ENCODE measurements at regions of chr5 and their contacts with region 1.

Region 1: DNA sequence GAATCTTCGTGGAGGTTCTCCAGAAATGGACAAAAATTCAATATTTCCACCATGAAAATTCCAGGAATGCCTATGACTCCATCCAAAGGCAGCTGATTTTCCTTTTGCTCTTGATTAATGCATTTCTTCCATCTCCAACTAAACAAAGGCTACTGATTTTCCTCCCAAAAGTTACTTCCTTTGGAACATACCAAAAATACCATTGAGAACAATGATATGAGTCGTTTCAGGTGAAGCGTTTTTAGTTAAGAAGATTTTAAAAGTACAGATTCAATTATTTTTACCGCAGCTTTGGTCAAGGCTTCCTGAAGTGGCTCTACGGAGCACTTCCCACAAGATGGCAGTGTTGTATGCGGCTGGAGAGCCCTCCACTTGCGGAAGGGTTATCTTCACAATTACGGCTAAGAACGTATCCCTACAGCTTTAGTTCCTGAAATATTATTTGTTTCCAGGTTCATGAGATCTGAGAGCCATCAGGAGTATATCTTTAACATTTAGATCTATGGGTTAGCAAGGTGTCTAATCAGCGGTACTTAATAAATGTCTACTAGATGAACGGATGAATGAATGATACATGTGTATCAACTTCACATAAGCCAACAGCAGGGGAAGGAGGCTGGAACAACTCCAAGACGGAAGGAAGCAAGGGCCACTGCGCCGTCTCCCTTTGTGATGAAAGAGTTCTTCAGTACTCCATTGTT is 35.9 kb upstream of the ARSB start:
- DNase-seq: peak; percentile 83

Region 2: DNA sequence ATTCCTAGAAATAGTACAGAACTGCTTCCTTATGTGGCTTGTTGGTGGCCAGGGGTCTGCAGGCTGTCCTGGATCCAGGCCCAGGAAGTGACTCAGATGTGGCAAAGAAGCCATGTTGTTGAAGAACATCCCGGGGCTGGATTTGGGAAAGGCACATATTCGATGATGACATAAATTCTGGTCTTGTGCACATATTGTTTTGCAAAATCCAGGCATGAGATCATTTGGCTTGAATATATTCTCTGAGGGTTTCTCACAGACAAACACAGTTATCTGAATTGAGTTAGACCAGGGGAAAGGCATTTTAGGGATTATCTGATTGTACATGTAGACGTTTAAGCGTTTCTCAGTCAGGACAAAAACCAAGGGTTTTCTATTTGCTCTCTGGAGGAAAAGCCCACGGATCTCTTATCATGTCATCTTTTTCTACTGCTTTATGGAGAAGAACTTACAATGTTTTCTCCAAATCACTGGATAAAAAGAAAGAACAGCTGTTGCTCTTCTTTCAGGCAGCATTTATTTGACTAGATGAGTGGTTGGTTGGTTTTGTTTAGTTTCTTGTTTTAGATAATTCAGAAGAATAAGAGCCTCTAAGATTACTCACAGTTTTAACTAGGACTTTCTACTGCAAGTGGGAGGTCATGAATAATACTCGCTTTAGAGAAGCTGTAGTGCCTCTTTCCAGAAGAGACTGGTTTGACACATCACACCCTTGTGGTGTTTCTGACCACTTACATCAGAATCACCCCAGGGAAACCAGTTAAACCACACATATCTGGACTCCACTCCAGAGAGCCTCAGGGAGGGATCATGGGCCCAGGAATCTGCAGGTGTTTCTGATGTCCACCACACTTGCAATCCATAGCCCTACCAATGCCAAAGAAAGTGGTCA is 343.0 kb before region 1 on chr5:
- intact Hi-C with region 1: no loop called
- DNase-seq: peak; percentile 87

Region 3: DNA sequence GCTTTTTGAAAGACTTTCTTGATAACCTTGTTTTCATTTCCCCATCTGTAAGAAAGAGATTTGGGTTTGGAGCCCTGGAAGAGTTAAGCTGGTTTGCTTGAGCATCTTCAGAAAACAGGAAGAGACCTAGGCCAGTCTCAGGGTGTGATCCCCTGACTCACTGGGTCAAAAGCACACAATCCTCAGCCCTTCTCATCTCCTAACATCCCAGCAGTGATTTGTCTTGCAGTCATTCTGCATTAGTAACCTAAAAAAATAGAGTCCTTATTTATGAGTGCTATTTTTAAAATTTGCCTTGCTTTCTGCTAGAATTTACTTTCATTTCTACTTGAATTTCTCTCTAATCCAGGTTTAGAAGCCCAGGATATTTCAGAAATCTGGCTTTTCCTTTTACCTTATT is 19.5 kb before region 1 on chr5:
- intact Hi-C with region 1: no loop called
- DNase-seq: no peak

Region 4: DNA sequence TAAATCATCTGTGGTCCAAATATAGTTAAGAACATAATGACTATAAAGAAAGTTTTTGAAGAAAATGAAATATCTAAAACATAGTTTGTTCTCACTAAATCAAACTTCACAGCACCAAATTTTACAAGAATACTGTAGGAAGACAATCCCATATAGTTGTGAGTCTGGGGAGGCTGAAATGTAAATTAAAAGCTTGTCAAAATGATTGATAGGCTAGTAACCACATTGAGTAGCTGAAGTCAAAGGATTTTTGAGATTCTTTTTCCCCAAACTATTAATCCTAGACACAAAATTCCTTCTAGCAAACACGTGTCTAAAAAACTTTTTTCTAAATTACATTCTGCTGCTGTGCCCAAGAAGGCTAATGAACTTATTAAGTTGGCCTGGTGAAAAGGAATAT is 103.6 kb after region 1 on chr5:
- intact Hi-C with region 1: loop called in 1 of 2 experiments (anchors 5 kb)
- DNase-seq: no peak

Region 5: DNA sequence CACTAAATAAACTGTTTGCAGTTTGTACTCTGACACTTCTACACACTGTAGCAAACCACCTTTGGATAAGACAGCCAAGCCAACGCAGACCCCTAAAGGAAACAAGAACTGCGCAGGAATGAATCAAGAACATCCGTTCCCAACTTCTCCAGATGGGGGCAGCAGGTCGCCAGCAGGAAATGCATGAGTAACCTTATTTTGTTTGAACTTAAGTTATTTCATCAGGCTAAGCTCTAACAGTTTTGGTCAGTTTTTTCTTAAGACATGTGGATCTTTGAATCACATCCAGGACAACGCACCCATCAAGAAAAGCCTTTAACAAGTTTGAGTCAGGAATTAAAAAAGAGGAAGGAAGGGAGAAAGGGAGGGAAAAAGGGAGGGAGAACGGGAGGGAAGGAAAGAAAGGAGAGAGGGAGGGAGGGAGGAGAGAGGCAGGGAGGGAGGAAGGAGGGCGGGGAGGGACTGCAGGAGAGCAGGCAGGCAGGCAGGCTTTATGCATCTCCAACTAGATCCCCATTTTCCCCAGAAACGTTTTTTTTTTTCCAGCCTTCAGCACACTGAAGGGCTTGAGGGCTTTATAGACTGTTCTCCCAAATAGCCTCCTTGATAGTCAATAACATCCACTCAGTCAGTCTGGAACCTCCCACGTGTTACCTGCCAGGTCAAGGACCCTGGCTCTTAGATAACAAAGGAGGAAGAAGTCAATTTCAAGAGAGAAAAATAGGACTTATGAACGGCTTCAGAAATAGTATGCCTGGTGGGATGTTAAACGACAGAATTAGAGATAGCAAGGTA is 112.8 kb after region 1 on chr5:
- intact Hi-C with region 1: loop called (anchors 5 kb)
- DNase-seq: no peak

Region 6: GRCh38 chr5:79464695-79465332 is 443.8 kb after region 1 on chr5:
- intact Hi-C with region 1: loop called in 1 of 2 experiments (anchors 10 kb)
- DNase-seq: no peak